IMR-90 (cell line): ENCODE measurements at regions of chr6 and their contacts with region 1.

Region 1: DNA sequence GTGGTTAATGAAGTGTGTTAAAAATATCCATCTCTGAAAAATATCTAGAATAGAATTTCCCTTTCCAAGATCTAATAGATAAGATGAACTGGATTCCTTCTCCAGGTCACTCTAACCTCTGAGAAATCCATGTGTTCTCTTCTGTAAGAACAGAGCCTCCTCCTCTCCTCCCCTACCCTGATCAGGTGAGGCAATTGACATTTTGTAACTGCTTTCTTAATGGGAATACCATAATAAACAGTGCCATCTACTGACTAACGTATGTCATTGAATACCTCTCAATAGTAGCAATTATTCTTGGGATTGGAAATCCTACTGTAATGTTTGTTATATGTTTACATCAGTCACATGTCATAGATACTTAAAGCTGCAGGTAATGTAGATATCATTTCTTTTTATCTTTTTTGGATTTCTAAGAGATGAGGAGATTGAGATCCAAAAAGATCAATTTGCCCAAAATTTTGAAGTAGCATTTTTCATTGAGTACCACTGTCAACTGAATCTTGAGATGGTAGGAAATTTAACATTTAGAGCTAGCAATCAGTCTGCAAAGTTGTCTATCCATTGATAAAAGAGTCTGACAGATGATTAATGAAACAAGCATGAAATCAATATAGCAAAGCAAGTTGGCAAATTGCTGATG is 365.8 kb upstream of the HSF2 start:
- DNase-seq: peak; percentile 70
- ATAC-seq: peak; percentile 88
- H3K4me3 ChIP-seq: no peak overlapping the region
- H3K27ac ChIP-seq: no peak overlapping the region
- H3K4me1 ChIP-seq: no peaks in the 10 kb centered on the region
- H3K27me3 ChIP-seq: no peaks in the 10 kb centered on the region
- CTCF ChIP-seq: peak; percentile 76
- POLR2A ChIP-seq: no peak
- RAD21 ChIP-seq: peak; percentile 89

Region 2: GRCh38 chr6:121584586-121585369 is 448.9 kb before region 1 on chr6:
- CTCF ChIA-PET with region 1: no interaction called
- POLR2A ChIA-PET with region 1: no interaction called
- dilution Hi-C with region 1: no loop called
- in situ Hi-C with region 1: no loop called
- intact Hi-C with region 1: loop called (anchors 10 kb)
- DNase-seq: peak; percentile 74
- ATAC-seq: peak; percentile 74
- H3K4me3 ChIP-seq: no peak overlapping the region
- H3K27ac ChIP-seq: no peak overlapping the region
- H3K4me1 ChIP-seq: peaks cover 8% of the 10 kb centered on the region; the same call in 1 of the 2 replicates
- H3K27me3 ChIP-seq: no peaks in the 10 kb centered on the region
- CTCF ChIP-seq: no peak
- POLR2A ChIP-seq: no peak
- RAD21 ChIP-seq: no peak

Region 3: GRCh38 chr6:121694389-121695251 is 339.0 kb before region 1 on chr6:
- CTCF ChIA-PET with region 1: interaction called, 3 read pairs
- POLR2A ChIA-PET with region 1: no interaction called
- dilution Hi-C with region 1: no loop called
- in situ Hi-C with region 1: no loop called
- intact Hi-C with region 1: loop called (anchors 10 kb)
- DNase-seq: peak; percentile 45
- ATAC-seq: no peak
- H3K4me3 ChIP-seq: no peak overlapping the region
- H3K27ac ChIP-seq: 0 out of 2 replicates have a peak overlapping the region, but pooled peaks have one; percentile 40
- H3K4me1 ChIP-seq: peaks cover 19% of the 10 kb centered on the region
- H3K27me3 ChIP-seq: no peaks in the 10 kb centered on the region
- CTCF ChIP-seq: no peak
- POLR2A ChIP-seq: no peak
- RAD21 ChIP-seq: no peak

Region 4: GRCh38 chr6:121881974-121882667 is 151.5 kb before region 1 on chr6:
- CTCF ChIA-PET with region 1: interaction called, 3 read pairs
- POLR2A ChIA-PET with region 1: no interaction called
- dilution Hi-C with region 1: no loop called
- in situ Hi-C with region 1: no loop called
- intact Hi-C with region 1: loop called (anchors 5 kb)
- DNase-seq: peak; percentile 92
- ATAC-seq: peak; percentile 78
- H3K4me3 ChIP-seq: no peak overlapping the region
- H3K27ac ChIP-seq: peak overlapping the region; percentile 13; the same call in 1 of the 2 replicates
- H3K4me1 ChIP-seq: peaks cover 19% of the 10 kb centered on the region
- H3K27me3 ChIP-seq: no peaks in the 10 kb centered on the region
- CTCF ChIP-seq: no peak
- POLR2A ChIP-seq: no peak
- RAD21 ChIP-seq: no peak

Region 5: DNA sequence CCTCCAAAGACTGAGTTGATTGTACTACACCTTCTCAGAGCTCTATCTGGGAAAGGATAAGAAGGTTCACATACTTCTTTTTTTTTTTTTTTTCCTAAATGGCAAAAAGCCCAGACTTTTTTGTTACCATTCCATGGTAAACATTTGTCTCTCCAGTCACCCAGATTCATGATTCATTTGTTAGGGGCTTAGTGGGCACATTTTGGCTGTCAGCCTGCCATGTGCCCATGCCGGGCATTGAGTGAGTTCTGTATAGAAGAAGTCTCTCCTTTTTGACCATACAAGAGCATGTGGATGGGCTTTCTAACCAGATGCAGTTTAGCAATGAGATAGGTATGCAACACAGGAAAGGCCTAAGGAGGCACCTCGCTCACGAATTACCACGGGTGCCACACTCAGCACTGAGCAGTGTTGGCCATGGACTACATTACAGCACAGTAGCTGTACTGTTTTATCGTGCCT is 81.7 kb before region 1 on chr6:
- CTCF ChIA-PET with region 1: interaction called, 12 read pairs
- POLR2A ChIA-PET with region 1: no interaction called
- dilution Hi-C with region 1: no loop called
- in situ Hi-C with region 1: no loop called
- intact Hi-C with region 1: no loop called
- DNase-seq: peak; percentile 80
- ATAC-seq: peak; percentile 87
- H3K4me3 ChIP-seq: no peak overlapping the region
- H3K27ac ChIP-seq: peak overlapping the region; percentile 15
- H3K4me1 ChIP-seq: peaks cover 7% of the 10 kb centered on the region
- H3K27me3 ChIP-seq: no peaks in the 10 kb centered on the region
- CTCF ChIP-seq: no peak
- POLR2A ChIP-seq: no peak
- RAD21 ChIP-seq: no peak

Region 6: GRCh38 chr6:122184401-122184827 is 150.8 kb after region 1 on chr6:
- CTCF ChIA-PET with region 1: no interaction called
- POLR2A ChIA-PET with region 1: no interaction called
- dilution Hi-C with region 1: no loop called
- in situ Hi-C with region 1: no loop called
- intact Hi-C with region 1: loop called (anchors 1 kb)
- DNase-seq: peak; percentile 47
- ATAC-seq: peak; percentile 84
- H3K4me3 ChIP-seq: peak overlapping the region; percentile 3; the same call in 1 of the 2 replicates
- H3K27ac ChIP-seq: no peak overlapping the region
- H3K4me1 ChIP-seq: no peaks in the 10 kb centered on the region
- H3K27me3 ChIP-seq: no peaks in the 10 kb centered on the region
- CTCF ChIP-seq: peak; percentile 64
- POLR2A ChIP-seq: no peak
- RAD21 ChIP-seq: peak; percentile 79